ENCODE measurements at regions of chr12 and their contacts with region 1.

Region 1: DNA sequence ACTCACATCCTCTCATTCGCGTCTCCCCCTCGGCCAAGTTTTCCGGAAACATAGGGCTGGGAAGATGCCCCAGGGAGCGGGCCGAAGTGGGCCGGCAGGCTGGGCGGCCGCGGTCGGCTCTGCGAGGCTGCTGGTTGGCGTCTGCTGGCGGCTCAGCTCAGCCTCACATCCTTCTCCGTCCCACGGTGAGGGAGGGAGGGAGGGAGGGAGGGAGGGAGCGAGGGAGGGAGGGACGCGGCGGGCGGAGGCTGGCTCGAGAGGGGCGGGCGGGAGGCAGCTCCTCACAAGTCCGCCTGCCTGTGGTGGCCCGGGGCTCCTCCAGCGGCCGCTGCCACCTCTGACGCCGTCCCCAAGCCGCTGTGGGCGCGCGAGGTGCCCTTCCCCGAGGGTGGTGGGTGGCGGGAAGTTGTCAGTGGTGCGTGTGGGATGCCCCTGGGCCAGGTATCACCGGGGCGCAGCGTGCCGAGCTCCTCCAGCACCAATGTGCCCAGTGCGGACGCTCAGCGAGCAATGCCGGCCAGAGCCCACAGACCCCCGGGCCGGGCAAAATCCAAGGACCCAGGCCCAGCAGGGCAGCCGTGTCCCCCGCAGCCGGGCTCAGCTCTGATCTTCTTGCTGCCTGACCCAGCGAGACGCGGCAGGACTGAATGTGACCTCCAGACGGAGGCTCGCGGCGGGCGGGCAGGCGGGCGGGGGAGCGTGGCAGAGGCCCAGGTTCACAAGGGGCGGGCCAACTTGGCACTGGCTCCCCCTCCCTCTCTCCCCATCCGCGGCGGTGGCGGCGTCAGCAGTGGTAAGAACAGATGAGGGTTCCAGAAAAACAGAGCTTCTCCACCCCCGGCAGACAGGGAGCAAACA is 94.0 kb downstream of the RFLNA start:
- DNase-seq: peak; percentile 87
- H3K4me3 ChIP-seq: peak overlapping the region; percentile 42 to 83 (median 81)
- H3K27ac ChIP-seq: peak overlapping the region; percentile 92
- H3K4me1 ChIP-seq: peaks cover 84% of the 10 kb centered on the region
- H3K27me3 ChIP-seq: no peaks in the 10 kb centered on the region
- CTCF ChIP-seq: no peak
- POLR2A ChIP-seq: peak; percentile 66

Region 2: DNA sequence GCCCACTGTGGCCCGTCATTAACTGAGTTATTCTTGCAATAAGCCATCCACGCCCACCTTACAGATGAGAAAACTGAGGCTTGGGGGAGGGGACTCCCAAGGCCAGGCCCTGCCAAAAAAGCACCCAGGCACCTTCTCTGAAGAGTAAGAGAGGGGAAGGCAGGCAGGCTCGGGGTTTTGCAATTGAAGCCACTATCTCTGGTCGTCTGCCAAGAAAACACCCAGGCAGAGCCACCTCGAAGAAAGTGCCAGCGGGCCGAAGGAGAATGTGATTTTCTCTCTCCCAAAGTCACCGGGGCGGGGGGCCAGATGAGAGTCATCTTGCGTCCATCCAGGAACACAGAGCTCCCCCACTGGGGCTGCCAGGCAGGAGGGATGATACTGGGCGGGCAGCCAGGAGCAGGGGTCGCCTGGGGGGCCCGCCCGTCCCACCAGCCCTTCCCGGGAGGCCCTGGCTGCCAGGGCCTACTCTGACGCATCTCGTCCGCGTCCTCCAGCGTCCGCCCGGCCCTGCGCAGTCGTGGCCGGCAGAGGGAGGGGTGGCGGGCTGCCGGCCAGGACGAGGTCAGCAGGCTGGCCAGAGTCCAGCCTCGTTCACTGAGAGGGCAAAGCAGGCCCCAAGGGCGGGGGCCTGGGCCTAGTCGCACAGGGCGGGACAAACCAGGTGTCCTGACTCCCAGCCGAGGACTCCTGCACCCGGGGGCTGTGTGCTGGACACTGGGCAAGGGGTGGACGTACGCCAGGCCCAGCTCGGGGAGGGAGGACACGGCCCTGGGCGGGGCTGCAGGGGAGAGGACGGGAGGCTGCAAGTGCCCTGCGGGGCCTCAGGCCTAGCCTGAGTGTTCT is 19.6 kb before region 1 on chr12:
- CTCF ChIA-PET with region 1: interaction called, 10 read pairs
- POLR2A ChIA-PET with region 1: no interaction called
- dilution Hi-C with region 1: no loop called
- intact Hi-C with region 1: loop called (anchors 2 kb)
- DNase-seq: peak; percentile 90
- H3K4me3 ChIP-seq: no peak overlapping the region
- H3K27ac ChIP-seq: peak overlapping the region; percentile 61
- H3K4me1 ChIP-seq: peaks cover 29% of the 10 kb centered on the region
- H3K27me3 ChIP-seq: no peaks in the 10 kb centered on the region
- CTCF ChIP-seq: peak; percentile 31 to 60
- POLR2A ChIP-seq: no peak

Region 3: GRCh38 chr12:124399622-124400021 is 10.7 kb after region 1 on chr12:
- CTCF ChIA-PET with region 1: interaction called, 60 read pairs
- POLR2A ChIA-PET with region 1: interaction called, 4 read pairs
- dilution Hi-C with region 1: no loop called
- intact Hi-C with region 1: no loop called
- DNase-seq: peak; percentile 49
- H3K4me3 ChIP-seq: no peak overlapping the region
- H3K27ac ChIP-seq: no peak overlapping the region
- H3K4me1 ChIP-seq: peaks cover 8% of the 10 kb centered on the region
- H3K27me3 ChIP-seq: no peaks in the 10 kb centered on the region
- CTCF ChIP-seq: peak; percentile 75 to 76
- POLR2A ChIP-seq: no peak

Region 4: GRCh38 chr12:124422570-124423523 is 33.9 kb after region 1 on chr12:
- CTCF ChIA-PET with region 1: interaction called, 11 read pairs
- POLR2A ChIA-PET with region 1: interaction called, 8 read pairs
- dilution Hi-C with region 1: no loop called
- intact Hi-C with region 1: loop called (anchors 2 kb)
- DNase-seq: peak; percentile 90
- H3K4me3 ChIP-seq: no peak overlapping the region
- H3K27ac ChIP-seq: peak overlapping the region; percentile 98
- H3K4me1 ChIP-seq: peaks cover 28% of the 10 kb centered on the region
- H3K27me3 ChIP-seq: no peaks in the 10 kb centered on the region
- CTCF ChIP-seq: no peak
- POLR2A ChIP-seq: peak; percentile 40

Region 5: GRCh38 chr12:124428130-124428791 is 39.4 kb after region 1 on chr12:
- CTCF ChIA-PET with region 1: interaction called, 11 read pairs
- POLR2A ChIA-PET with region 1: no interaction called
- dilution Hi-C with region 1: no loop called
- intact Hi-C with region 1: loop called (anchors 2 kb)
- DNase-seq: no peak
- H3K4me3 ChIP-seq: no peak overlapping the region
- H3K27ac ChIP-seq: peak overlapping the region; percentile 25
- H3K4me1 ChIP-seq: peaks cover 29% of the 10 kb centered on the region
- H3K27me3 ChIP-seq: no peaks in the 10 kb centered on the region
- CTCF ChIP-seq: no peak
- POLR2A ChIP-seq: no peak

Region 6: DNA sequence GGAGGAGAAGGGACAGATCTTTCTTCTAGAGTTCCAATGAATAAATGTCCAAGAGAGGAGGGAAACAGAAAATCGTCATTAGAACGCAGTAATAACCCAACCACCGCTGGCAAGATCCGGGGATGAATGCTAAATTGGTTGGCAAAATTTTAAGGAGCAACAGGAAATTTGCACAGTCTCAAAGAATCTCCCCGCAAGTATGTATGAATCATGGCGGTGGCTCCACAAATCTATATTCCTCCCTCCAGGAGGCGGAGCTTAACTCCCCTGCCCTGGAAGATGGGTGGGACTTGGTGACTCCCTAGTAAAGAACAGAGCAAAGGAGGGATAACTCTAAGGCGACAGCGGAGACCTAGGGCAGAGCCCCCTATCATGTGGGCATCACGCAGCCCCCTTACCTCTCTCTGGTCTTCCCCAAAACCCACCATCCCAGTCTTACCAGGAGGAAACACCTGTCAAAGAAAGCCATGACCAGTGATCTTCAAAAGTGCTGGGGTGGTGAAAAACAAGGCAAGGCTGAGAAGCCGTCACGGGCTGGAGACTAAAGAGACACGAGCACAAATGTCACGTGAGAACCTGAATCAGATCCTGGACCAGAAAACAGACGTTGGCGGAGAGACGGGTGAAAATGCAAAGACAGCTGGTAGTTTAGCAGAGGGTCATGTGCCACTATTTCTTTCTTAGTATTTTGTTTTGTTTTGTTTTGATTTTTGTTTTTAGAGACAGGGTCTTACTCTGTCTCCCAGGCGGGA is 52.7 kb after region 1 on chr12:
- CTCF ChIA-PET with region 1: interaction called, 4 read pairs
- POLR2A ChIA-PET with region 1: no interaction called
- dilution Hi-C with region 1: no loop called
- intact Hi-C with region 1: loop called (anchors 2 kb)
- DNase-seq: peak; percentile 83
- H3K4me3 ChIP-seq: peak overlapping the region in 1 of 3 experiments; percentile 5
- H3K27ac ChIP-seq: peak overlapping the region; percentile 89
- H3K4me1 ChIP-seq: peaks cover 27% of the 10 kb centered on the region
- H3K27me3 ChIP-seq: no peaks in the 10 kb centered on the region
- CTCF ChIP-seq: no peak
- POLR2A ChIP-seq: peak; percentile 56

Region 7: GRCh38 chr12:124694846-124695497 is 306.1 kb after region 1 on chr12:
- CTCF ChIA-PET with region 1: no interaction called
- POLR2A ChIA-PET with region 1: no interaction called
- dilution Hi-C with region 1: no loop called
- intact Hi-C with region 1: no loop called
- DNase-seq: peak; percentile 90
- H3K4me3 ChIP-seq: no peak overlapping the region
- H3K27ac ChIP-seq: peak overlapping the region; percentile 65
- H3K4me1 ChIP-seq: peaks cover 15% of the 10 kb centered on the region
- H3K27me3 ChIP-seq: peaks cover 0 to 1% of the 10 kb centered on the region in 2 experiments
- CTCF ChIP-seq: peak in 1 of 2 donors; percentile 13
- POLR2A ChIP-seq: no peak

Measured in endothelial cell of umbilical vein (primary cell).